GM18951 (cell line): ENCODE measurements at regions of chr12 and their contacts with region 1.

Region 1: GRCh38 chr12:40921563-40922163 is 229.4 kb downstream of the CNTN1 start:
- POLR2A ChIP-seq: no peak

Region 2: DNA sequence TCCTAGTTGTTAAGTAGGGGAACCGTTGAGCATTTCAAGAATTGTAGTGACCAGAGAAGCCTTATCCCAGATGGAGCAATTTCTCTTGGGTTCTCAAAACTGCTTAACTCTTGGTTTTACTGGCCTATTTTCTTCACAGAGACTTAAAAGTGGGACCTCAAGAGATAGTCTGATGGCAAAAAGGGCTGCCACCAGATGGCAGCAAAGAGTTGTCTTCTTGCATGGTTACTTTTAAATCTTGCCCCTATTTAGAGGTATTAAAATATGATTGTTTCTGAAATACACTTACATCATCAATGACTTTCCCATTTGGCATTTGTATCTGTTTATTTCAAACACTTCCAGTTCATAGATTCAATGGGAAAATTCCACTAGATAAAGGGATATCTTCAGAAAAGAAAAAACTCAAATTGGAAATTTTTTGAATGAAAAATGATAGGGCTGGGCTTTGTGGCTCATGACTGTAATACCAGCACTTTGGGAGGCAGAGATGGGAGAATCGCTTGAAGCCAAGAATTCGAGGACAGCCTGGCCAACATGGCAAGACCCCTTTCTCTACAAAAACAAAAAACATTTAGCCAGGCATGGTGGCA is 299.3 kb before region 1 on chr12:
- in situ Hi-C with region 1: loop called (anchors 10 kb)
- POLR2A ChIP-seq: no peak